AG04450 (cell line): ENCODE measurements at regions of chr3 and their contacts with region 1.

Region 1: GRCh38 chr3:194344012-194344411 is 7.1 kb downstream of the CPN2 start:
- DNase-seq: no peak
- H3K4me3 ChIP-seq: no peak overlapping the region
- H3K27ac ChIP-seq: no peak overlapping the region
- H3K27me3 ChIP-seq: no peaks in the 10 kb centered on the region
- CTCF ChIP-seq: peak; percentile 98

Region 2: GRCh38 chr3:193665370-193665989 is 678.5 kb before region 1 on chr3:
- CTCF ChIA-PET with region 1: interaction called, 14 read pairs
- POLR2A ChIA-PET with region 1: no interaction called
- DNase-seq: peak; percentile 4
- H3K4me3 ChIP-seq: no peak overlapping the region
- H3K27ac ChIP-seq: no peak overlapping the region
- H3K27me3 ChIP-seq: no peaks in the 10 kb centered on the region
- CTCF ChIP-seq: peak; percentile 50

Region 3: GRCh38 chr3:194333212-194333980 is 10.6 kb before region 1 on chr3:
- CTCF ChIA-PET with region 1: interaction called, 55 read pairs
- POLR2A ChIA-PET with region 1: no interaction called
- DNase-seq: no peak
- H3K4me3 ChIP-seq: peak overlapping the region; percentile 67
- H3K27ac ChIP-seq: no peak overlapping the region
- H3K27me3 ChIP-seq: no peaks in the 10 kb centered on the region
- CTCF ChIP-seq: peak; percentile 92

Region 4: DNA sequence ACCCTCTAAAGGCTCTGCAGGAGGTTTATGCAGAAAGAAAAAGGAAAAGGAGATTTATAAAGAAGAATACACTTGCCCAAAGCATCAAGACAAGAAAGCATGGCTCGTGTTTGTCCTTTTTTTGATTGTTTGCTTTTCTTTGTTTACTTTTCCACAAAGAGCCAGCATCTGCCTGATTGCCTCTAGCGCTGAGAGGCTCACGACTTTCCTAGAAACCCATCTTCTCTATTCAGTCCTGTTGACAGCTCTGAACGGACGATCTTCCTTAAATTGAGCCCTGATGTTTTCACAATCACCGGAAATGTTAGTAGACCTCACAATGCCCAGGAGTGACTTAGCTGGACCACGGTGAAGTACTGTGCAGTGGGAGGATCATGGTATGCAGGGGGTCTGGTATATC is 42.6 kb after region 1 on chr3:
- CTCF ChIA-PET with region 1: interaction called, 12 read pairs
- POLR2A ChIA-PET with region 1: no interaction called
- DNase-seq: no peak
- H3K4me3 ChIP-seq: no peak overlapping the region
- H3K27ac ChIP-seq: no peak overlapping the region
- H3K27me3 ChIP-seq: peaks cover 37% of the 10 kb centered on the region
- CTCF ChIP-seq: no peak

Region 5: GRCh38 chr3:194404365-194405140 is 60.5 kb after region 1 on chr3:
- CTCF ChIA-PET with region 1: interaction called, 69 read pairs
- POLR2A ChIA-PET with region 1: interaction called, 4 read pairs
- DNase-seq: no peak
- H3K4me3 ChIP-seq: no peak overlapping the region
- H3K27ac ChIP-seq: no peak overlapping the region
- H3K27me3 ChIP-seq: no peaks in the 10 kb centered on the region
- CTCF ChIP-seq: peak; percentile 66

Region 6: DNA sequence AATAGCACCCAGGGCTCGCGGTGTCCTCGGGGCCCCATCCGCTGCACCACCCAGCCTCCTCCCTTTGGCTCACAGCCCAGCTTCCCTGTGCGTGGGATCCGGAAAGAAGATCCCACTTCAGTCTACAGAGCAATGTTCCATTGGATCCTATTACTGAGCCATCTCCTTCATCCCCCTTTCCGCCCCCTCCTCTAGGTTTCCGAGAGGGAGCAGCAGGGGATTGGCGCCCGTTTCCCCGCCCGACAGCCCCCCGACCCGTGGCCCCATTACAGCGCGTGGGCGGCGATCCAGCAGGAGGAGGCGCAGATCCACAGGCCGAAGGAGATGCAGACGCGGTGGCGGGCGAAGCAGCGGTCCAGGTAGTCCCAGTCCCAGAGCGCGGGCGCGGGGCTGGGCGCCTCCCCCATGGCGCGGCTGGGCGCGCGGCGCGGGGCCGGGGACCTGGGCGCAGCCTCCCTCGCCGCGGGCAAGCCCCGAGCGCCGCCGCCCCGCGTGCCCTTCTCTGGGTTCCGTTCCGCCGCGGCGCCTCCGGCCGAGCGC is 288.9 kb after region 1 on chr3:
- CTCF ChIA-PET with region 1: interaction called, 10 read pairs
- POLR2A ChIA-PET with region 1: no interaction called
- DNase-seq: no peak
- H3K4me3 ChIP-seq: peak overlapping the region; percentile 68
- H3K27ac ChIP-seq: peak overlapping the region; percentile 52
- H3K27me3 ChIP-seq: no peaks in the 10 kb centered on the region
- CTCF ChIP-seq: no peak